Transverse colon (tissue), 4 donors: ENCODE measurements at regions of chr2 and their contacts with region 1.

Region 1: DNA sequence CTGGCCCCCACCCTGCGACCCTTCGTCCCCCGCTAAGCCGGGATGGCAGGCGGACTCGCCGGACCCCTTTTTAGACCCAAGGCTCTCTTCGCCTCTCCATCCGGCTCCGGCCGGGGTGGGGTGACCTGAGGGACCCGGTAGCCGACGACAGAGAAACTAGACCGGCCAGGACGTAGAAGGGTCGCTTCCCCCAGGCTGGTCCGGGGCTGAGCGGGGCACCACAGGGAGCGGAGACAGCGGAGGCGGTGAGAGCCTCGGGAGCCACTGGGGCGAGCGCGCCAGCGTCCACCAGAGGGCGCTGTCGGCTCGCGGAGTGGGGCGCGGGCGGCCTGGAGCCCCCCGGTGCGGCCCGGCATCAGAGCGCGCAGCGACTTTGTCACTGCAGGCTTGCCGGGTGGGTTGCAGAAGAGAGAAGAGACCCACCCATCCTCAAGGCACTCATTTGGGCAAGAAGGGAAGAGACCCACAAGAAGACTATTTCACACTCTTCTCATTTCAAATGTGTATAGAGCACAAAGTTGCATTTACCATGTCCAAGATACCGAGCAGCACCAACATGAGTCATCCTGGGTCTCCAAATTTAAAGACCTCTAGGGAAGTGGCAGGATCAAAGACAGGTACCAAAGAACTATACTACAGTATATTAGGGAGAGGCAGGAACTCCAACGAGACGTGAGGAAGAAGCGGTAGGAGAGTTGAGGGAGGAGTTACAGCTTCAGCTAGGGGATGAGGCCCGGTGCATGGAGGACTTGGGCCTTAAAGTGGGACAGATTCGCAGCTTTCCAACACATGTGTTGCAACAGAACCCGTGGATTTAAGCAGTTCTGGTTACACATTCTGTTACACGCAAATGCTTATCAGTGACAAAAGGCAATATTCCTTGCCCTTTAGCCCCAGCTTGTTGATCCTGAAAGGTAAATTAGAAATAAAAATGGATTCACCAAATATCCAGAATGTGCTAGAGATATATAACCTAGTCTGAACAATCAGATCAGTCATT is 7.6 kb upstream of the PRKCE start:
- DNase-seq: peak; percentile 71
- H3K4me3 ChIP-seq: peak overlapping the region; percentile 44 to 64 (median 52)
- H3K27ac ChIP-seq: peak overlapping the region in 2 of 4 donors; percentile 8 to 66
- H3K4me1 ChIP-seq: peaks cover 14 to 25% (median 19%) of the 10 kb centered on the region in 4 donors
- H3K27me3 ChIP-seq: peaks cover 14% of the 10 kb centered on the region
- CTCF ChIP-seq: peak; percentile 94 to 99 (median 98)
- EP300 ChIP-seq: no peak
- POLR2A ChIP-seq: no peak

Region 2: DNA sequence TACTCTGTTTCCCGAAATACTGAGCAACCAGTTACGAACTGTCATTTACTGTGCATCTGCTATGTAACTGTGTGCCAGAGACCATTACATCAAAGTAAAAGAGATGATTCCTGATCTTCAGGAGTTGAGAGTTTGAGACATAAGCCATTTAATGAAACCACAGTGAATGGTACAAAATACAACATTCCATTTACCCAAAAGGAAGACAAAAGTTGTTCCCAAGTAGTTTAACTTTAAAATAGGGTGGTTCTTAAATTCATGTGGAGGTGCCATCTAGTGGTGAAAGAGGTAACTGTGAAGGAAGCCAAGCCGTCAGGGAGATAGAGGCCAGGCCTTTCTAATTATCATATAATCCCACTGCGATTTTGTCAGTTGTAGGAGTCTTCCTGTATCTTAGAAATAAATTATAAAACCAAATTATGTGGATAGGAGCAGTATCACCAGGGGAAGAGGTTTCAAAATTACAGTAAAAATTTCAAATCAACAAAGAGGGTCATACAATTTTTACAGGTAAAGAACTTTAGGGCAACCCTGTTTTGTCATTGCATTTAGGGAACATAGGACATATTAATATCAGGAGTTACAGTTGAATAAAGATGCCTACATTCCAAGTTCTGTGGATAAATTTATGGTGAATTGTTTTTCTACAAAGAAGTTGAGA is 721.1 kb after region 1 on chr2:
- in situ Hi-C with region 1: loop called in 1 of 4 experiments (anchors 25 kb)
- intact Hi-C with region 1: no loop called
- DNase-seq: peak; percentile 37
- H3K4me3 ChIP-seq: no peak overlapping the region
- H3K27ac ChIP-seq: no peak overlapping the region
- H3K4me1 ChIP-seq: peaks cover 0 to 4% (median 0%) of the 10 kb centered on the region in 4 donors
- H3K27me3 ChIP-seq: no peaks in the 10 kb centered on the region
- CTCF ChIP-seq: peak; percentile 80 to 92 (median 85)
- EP300 ChIP-seq: no peak
- POLR2A ChIP-seq: no peak